ENCODE measurements at regions of chr6 and their contacts with region 1.

Region 1: GRCh38 chr6:18506382-18507017 is 119.3 kb downstream of the RNF144B start:
- DNase-seq: no peak
- H3K4me3 Mint-ChIP-seq: no peak overlapping the region
- H3K27ac Mint-ChIP-seq: no peak overlapping the region
- H3K4me1 Mint-ChIP-seq: no peaks in the 10 kb centered on the region
- H3K27me3 Mint-ChIP-seq: peaks cover 5% of the 10 kb centered on the region

Region 2: DNA sequence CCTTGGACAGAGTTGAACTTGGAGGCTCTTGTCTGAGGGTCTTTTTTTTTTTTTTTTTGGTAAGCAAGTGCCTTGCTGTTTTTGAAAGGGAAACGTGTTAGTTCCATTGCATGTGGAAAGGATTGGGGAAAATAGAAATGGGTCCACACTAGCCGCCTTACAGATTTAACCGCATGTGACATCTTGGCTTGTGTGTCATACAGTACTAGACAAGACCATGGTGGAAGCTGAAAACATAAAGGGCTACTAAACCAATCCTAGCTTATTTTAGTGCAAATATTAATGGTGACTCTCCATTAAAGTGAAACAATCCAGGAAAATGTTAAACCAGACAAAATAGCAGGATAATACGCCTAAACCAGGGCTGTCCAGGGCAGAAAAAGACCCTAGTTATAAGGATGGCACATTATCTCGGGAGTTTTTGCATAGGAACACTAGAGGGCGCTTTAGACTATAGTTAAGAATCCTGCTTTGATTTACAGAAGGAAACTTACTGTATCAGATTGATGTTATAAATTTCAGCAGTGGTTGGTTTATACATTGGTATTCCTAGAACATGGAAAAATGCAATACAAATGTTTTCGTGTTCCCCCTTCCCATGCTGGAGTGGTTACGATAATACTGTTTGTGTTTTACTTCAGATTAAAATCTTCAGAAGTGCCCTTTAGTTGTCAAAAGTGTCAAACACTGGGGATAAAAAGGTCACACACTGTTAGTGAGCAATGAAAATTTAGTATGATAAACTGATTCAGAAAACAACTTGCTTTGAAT is 182.4 kb before region 1 on chr6:
- CTCF ChIA-PET with region 1: interaction called, 11 read pairs
- POLR2A ChIA-PET with region 1: no interaction called
- DNase-seq: no peak
- H3K4me3 Mint-ChIP-seq: no peak overlapping the region
- H3K27ac Mint-ChIP-seq: no peak overlapping the region
- H3K4me1 Mint-ChIP-seq: peaks cover 16% of the 10 kb centered on the region
- H3K27me3 Mint-ChIP-seq: no peaks in the 10 kb centered on the region

Region 3: GRCh38 chr6:18477301-18477941 is 29.1 kb before region 1 on chr6:
- CTCF ChIA-PET with region 1: no interaction called
- POLR2A ChIA-PET with region 1: no interaction called
- DNase-seq: no peak
- H3K4me3 Mint-ChIP-seq: no peak overlapping the region
- H3K27ac Mint-ChIP-seq: no peak overlapping the region
- H3K4me1 Mint-ChIP-seq: peaks cover 2% of the 10 kb centered on the region
- H3K27me3 Mint-ChIP-seq: peaks cover 20% of the 10 kb centered on the region

Measured in activated CD4-positive, alpha-beta memory T cell treated with anti-CD3 and anti-CD28 coated beads, Interleukin-2, amount 10 ng/mL, durations not matched to agents 7 days and 5 days (primary cell).